Right ventricle myocardium inferior (tissue), 1 donor: ENCODE measurements at regions of chr2 and their contacts with region 1.

Region 1: DNA sequence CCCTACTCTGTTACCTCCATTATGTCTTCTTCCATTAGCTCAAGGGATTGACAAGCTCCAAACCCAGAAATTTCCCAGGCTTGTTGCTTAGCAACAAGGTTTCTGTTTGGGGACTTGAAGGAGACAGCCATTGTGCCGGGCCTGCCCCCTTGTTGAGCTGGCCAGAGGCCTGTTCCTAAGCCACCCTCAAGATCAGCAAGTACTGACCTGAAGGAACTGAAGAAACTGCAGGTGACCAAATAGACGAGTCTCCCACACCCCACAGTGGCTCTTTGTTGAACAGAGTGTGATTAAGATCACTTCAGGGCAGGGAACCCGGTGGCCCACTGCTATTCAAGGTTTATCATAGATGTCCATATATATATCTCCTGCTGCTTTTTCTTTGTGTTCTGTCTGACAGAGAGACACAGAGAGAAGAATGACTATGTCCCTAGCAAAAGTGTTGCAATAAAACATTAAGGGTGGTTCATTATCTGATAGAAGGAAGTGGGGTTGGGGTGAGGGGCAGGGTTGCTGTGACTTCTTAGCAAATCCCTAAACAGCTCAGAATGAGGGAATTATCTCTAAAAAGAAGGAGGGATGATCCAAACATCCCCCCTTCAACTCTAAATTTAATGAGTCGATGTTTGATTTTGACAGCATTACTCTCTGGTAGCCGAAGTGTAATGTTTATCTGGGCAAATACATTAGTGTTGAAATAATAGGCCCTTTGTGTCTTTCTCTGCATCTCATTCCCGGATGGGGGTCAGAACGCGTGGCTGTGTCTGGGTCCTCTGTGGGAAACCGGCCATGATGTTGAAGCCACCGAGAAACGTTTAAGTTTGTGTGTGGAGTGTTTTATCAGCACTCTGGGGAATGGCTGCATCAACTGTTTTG is 69.3 kb downstream of the RNF144A start:
- DNase-seq: no peak
- ATAC-seq: peak; percentile 56

Region 2: DNA sequence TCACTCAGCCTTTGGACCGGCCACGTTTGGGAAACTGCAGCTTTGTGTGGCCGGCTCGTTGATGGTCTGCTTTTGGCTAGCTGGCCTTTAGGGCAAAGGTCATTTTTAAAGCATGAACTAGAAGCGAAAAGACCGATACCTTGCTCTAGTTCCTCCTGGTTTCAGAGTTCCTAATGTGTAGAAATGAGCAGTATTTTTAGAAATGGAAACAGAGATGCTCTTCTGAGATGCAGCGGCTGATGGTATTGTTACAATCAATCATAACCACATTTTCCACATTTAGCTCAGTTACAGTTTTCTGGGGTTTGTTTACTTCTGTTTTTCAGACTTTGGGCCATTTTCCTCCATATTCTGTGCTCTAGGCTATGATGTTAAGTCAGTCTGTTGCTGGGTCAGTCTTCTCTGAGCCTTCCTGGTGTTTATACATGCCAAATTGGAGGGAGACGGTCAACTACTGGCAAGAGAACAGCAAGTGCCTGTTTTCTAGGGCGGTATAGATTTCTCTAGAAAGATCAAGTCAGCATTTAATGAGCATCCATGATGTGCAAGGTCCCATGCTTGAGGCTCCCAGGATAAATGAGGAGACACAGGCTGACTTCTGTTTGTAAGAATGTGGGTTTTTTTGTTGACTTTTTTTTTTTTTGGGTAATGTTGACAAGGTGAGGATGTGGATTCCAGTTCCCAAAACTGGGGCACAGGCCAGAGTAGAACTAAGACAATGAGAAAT is 41.3 kb before region 1 on chr2:
- intact Hi-C with region 1: loop called (anchors 5 kb)
- DNase-seq: no peak
- ATAC-seq: no peak

Region 3: GRCh38 chr2:7053637-7054265 is 67.2 kb after region 1 on chr2:
- intact Hi-C with region 1: no loop called
- DNase-seq: no peak
- ATAC-seq: no peak